ENCODE measurements at regions of chr14 and their contacts with region 1.

Region 1: GRCh38 chr14:23588884-23589598 is 10.5 kb upstream of the JPH4 start:
- DNase-seq: peak; percentile 90
- ATAC-seq: peak; percentile 99
- H3K4me3 Mint-ChIP-seq: no peak overlapping the region
- H3K27ac Mint-ChIP-seq: no peak overlapping the region
- H3K4me1 Mint-ChIP-seq: peaks cover 12% of the 10 kb centered on the region
- H3K27me3 Mint-ChIP-seq: peaks cover 17% of the 10 kb centered on the region

Region 2: GRCh38 chr14:23209651-23210423 is 379.2 kb before region 1 on chr14:
- CTCF ChIA-PET with region 1: no interaction called
- DNase-seq: no peak
- ATAC-seq: no peak
- H3K4me3 Mint-ChIP-seq: no peak overlapping the region
- H3K27ac Mint-ChIP-seq: no peak overlapping the region
- H3K4me1 Mint-ChIP-seq: no peaks in the 10 kb centered on the region
- H3K27me3 Mint-ChIP-seq: peaks cover 37% of the 10 kb centered on the region

Region 3: GRCh38 chr14:23605931-23606585 is 17.0 kb after region 1 on chr14:
- CTCF ChIA-PET with region 1: interaction called, 35 read pairs
- DNase-seq: peak; percentile 51
- ATAC-seq: peak; percentile 79
- H3K4me3 Mint-ChIP-seq: peak overlapping the region; percentile 1
- H3K27ac Mint-ChIP-seq: peak overlapping the region; percentile 88
- H3K4me1 Mint-ChIP-seq: peaks cover 60% of the 10 kb centered on the region
- H3K27me3 Mint-ChIP-seq: no peaks in the 10 kb centered on the region

Region 4: DNA sequence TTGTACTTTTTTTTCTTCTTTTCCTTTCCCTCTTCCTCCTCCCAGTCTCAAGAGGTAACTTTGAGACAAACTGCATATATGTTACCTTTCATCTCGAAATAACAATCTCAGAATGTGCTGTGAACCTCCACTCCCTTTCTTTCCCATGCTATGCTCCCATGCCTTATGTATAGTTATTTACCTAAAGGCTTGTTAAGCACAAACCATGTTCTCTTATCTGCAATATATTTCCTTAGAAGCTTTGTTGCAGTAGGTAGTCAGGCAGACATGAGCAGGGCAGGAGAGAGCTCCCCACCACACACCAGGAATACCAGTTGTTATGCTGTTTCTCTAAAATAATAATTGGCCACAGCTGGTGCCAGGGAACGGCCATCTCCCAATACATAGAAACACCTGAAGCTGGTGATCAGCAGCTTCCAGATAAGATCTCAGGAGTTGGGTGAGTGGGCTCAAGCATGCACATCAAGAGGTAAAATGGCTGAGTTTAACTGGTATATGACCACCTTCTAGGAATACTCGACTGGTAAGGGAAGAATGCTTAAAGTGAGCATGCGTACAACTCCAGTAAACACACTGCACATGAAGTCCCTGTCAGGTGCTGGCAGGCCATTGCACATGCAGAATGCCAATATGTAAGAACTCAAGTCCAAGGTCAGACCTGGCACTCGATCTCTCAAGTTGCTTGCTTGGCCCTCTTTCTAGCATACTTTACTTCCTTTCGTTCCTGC is 32.3 kb after region 1 on chr14:
- CTCF ChIA-PET with region 1: interaction called, 10 read pairs
- DNase-seq: no peak
- ATAC-seq: no peak
- H3K4me3 Mint-ChIP-seq: no peak overlapping the region
- H3K27ac Mint-ChIP-seq: no peak overlapping the region
- H3K4me1 Mint-ChIP-seq: peaks cover 3% of the 10 kb centered on the region
- H3K27me3 Mint-ChIP-seq: peaks cover 11% of the 10 kb centered on the region

Region 5: DNA sequence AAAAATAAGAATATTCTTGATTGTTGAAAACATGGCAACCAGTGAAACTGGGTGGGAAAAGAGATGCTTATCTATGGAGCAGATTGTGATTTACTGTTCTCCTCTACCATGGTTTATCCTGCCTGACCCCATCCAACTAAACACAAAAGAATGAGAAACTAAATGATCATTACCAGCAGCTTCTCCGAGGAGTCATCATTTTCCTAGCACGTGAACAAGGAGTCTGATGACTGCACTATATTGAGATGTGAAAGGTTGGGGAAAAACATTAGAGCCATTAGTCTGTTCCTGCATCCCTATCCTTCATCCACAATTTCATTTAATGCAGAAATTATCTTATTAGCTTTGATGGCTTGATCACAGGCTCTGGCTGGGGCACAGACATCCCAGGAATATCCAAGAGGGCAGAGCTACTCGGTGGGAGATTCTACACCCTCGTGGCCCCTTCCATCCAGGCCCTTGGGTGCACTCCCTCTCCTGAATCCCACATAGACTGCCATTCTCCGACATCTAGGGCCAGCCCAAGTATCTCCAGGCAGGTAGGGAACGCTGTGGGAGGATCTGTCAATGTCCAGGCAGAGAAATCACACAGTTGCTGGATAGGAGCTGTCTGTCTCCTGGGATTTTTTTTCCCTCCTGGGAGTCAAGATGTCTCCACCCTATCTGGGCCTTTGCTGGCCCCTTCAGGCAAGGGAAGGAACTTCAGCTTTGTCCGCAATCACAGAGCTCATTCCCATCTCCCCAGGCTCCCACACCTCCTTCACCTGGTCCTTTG is 321.2 kb after region 1 on chr14:
- CTCF ChIA-PET with region 1: interaction called, 36 read pairs
- DNase-seq: no peak
- ATAC-seq: no peak
- H3K4me3 Mint-ChIP-seq: no peak overlapping the region
- H3K27ac Mint-ChIP-seq: no peak overlapping the region
- H3K4me1 Mint-ChIP-seq: peaks cover 2% of the 10 kb centered on the region
- H3K27me3 Mint-ChIP-seq: peaks cover 19% of the 10 kb centered on the region

Region 6: GRCh38 chr14:23929822-23930294 is 340.8 kb after region 1 on chr14:
- CTCF ChIA-PET with region 1: interaction called, 25 read pairs
- DNase-seq: peak; percentile 88
- ATAC-seq: peak; percentile 85
- H3K4me3 Mint-ChIP-seq: no peak overlapping the region
- H3K27ac Mint-ChIP-seq: no peak overlapping the region
- H3K4me1 Mint-ChIP-seq: no peaks in the 10 kb centered on the region
- H3K27me3 Mint-ChIP-seq: peaks cover 6% of the 10 kb centered on the region

Region 7: GRCh38 chr14:23953464-23954278 is 364.6 kb after region 1 on chr14 and contains the start of gene DHRS4:
- CTCF ChIA-PET with region 1: interaction called, 13 read pairs
- DNase-seq: peak; percentile 92
- ATAC-seq: peak; percentile 98
- H3K4me3 Mint-ChIP-seq: peak within 1 kb of the TSS; percentile 88
- H3K27ac Mint-ChIP-seq: peak within 1 kb of the TSS; percentile 88
- H3K4me1 Mint-ChIP-seq: peaks cover 25% of the 10 kb centered on the region
- H3K27me3 Mint-ChIP-seq: no peaks in the 10 kb centered on the region
- total RNA-seq, gene DHRS4: 15.5 to 20.7 TPM

Measured in activated CD8-positive, alpha-beta memory T cell treated with anti-CD3 and anti-CD28 coated beads, Interleukin-2, amount 10 ng/mL, durations not matched to agents 7 days and 5 days (primary cell).